ENCODE measurements at regions of chr2 and their contacts with region 1.

Region 1: DNA sequence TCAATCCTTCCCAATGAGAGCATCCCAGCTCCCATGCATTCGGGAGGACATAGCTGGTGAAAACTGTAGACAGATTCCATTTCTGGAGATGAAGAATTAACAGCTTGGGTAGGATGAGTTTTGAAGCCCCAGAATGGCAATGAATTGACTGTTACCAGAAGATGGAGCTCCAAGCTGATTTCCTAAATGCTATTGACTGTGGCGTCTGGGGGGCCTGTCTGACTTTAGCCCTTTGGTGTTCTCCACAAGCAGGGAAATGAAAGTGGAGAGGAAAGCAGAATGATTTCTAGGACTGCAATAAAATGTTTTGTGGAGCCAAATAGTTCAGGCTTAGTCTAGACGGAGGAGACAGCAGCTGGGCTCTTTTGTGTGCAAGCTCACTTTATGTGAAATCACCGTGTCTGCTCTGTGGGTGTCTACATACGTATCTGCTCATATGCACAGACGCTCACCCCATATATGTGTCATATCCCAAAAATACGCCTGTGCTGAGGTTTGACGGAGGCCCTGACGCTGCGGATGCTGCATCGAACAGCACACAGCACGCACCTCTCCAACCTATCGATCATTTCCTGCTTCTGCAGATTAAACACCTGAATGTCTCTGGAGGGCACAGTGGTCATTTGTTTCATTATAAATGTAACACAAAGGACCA is 166.4 kb upstream of the PXDN start:
- DNase-seq: no peak

Region 2: DNA sequence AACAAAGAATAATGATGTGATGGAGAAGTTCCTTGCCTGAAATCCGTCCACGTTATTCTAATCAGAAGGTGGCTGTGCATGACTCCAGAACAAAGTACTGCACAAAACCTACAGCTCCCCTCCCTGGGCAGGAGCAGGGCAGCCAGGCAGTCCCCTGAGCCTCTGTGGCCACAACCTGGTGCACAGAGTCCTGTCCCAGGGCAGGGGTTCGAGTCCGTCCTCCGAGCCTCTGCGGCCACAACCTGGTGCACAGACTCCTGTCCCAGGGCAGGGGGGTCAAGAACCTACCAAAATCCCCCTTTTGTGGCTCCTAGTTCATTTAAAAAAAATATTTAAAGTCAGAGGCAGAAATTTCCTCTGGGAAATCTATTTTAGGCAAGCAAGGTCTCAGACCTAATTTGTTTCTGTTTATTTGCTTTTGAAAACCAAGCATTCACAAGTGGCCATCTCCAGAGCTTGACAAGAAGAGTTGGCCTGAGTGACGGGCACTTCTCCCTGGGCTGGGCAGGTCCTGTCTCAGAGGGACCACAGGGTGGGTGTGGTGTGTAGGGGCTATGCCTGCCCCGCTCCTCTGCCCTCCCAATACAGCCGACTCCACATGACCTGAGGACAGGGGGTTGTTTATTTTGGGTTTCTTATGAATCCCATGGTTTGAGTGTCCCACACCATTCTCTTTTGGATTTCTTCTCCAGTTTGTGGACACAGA is 89.5 kb after region 1 on chr2:
- intact Hi-C with region 1: no loop called
- DNase-seq: no peak

Region 3: DNA sequence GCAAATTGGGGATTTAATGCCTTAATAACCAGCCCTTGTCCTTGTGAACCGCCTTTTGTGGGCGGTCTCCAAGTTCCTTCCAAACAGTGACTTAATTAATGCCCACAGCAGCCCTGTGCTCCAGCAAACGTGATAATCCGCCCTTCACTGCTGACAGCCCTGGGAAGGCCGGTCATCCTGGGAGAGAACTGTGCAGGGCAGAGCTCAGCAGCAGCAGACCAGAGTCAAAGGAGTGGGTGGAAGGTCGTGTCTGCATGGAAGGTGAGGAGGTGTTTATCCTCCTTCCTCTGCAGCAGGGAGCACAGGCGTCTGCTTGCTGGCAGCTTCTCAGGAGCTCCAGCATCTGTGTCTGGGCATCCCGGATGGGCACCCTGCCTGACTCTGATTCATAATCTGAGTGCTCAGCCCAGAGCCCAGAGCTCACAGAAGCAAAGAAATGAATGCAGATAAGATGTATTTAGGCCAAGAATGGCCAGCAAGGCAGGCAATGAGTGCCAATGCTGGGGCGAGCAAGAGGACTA is 103.6 kb after region 1 on chr2:
- intact Hi-C with region 1: loop called (anchors 5 kb)
- DNase-seq: no peak

Region 4: DNA sequence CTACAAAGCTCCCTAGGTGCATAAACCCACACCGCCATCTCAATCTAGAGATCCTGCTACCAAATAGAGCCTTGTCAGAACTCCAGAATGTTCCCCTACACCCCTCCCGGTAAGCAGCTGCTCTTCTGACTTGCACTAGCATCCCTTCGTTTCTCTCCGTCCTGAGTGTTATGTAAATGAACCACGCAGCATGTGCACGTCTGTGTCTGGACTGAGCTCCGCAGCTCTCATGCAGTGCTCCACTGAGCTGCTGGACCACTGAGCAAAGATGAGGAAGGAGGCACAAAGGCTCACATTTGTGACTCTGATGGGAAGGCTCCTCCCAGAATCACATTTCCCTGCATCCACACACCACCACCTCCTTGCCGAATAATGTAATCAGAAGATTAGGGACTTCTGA is 216.7 kb after region 1 on chr2:
- intact Hi-C with region 1: loop called (anchors 10 kb)
- DNase-seq: no peak